ENCODE measurements at regions of chr12 and their contacts with region 1.

Region 1: GRCh38 chr12:53481957-53482586 is 17.2 kb downstream of the MAP3K12 start:
- DNase-seq: no peak
- H3K4me3 ChIP-seq: no peak overlapping the region
- H3K27ac ChIP-seq: no peak overlapping the region
- H3K4me1 ChIP-seq: peaks cover 0 to 5% (median 1%) of the 10 kb centered on the region in 4 experiments; a peak in 4 of 7 replicates
- H3K27me3 ChIP-seq: no peaks in the 10 kb centered on the region
- CTCF ChIP-seq: peak; percentile 26 to 73 (median 46)
- EP300 ChIP-seq: no peak
- POLR2A ChIP-seq: peak; percentile 14 to 22; a peak in 2 of 3 replicates
- RAD21 ChIP-seq: peak; percentile 39 to 40; a peak in 3 of 4 replicates

Region 2: GRCh38 chr12:53344824-53345485 is 137.1 kb before region 1 on chr12:
- CTCF ChIA-PET with region 1: interaction called, 11 read pairs
- POLR2A ChIA-PET with region 1: interaction called, 12 read pairs
- DNase-seq: peak in 1 of 2 experiments; percentile 78
- H3K4me3 ChIP-seq: peak overlapping the region; percentile 37 to 80 (median 72)
- H3K27ac ChIP-seq: no peak overlapping the region
- H3K4me1 ChIP-seq: peaks cover 0 to 15% (median 8%) of the 10 kb centered on the region in 4 experiments; a peak in 5 of 7 replicates
- H3K27me3 ChIP-seq: peaks cover 3 to 13% (median 8%) of the 10 kb centered on the region in 4 experiments; a peak in 4 of 7 replicates
- CTCF ChIP-seq: peak in 2 of 3 experiments; percentile 12 to 24; a peak in 2 of 4 replicates
- EP300 ChIP-seq: no peak
- POLR2A ChIP-seq: 0 out of 3 replicates have a peak, but pooled peaks of 1 of the 2 experiments have one; percentile 32
- RAD21 ChIP-seq: peak in 1 of 2 experiments; percentile 35; a peak in 2 of 4 replicates

Region 3: DNA sequence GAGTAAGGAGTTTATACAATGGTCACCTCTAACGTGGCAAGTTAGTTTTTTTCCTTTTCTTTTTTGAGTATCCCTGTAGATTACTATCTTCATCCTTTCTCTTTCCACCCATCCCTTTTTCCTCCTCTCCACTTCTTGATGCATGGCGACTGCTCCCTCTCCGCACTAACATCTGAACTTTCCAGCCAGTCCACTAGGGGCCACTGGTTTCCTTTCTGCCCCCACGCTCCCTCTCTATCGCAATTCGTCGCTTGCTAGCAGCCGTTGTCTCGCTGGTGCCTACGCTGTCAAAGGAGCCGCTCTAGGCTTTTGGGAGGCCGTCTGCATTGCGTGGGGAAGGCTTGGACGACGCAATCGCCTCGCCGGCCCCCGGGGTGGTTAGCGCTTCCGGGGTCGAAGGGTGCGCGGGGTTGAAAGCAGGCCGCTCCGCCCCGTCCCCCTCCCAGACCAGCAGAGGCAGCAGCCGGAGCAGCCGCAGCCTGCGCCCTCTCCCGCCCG is 30.4 kb before region 1 on chr12 and contains the start of gene PCBP2:
- CTCF ChIA-PET with region 1: interaction called, 24 read pairs
- POLR2A ChIA-PET with region 1: interaction called, 3,397 read pairs
- DNase-seq: peak; percentile 92 to 98
- H3K4me3 ChIP-seq: peak within 1 kb of the TSS; percentile 89 to 99 (median 94)
- H3K27ac ChIP-seq: peak within 1 kb of the TSS; percentile 96
- H3K4me1 ChIP-seq: peaks cover 0 to 8% (median 1%) of the 10 kb centered on the region in 4 experiments; a peak in 3 of 7 replicates
- H3K27me3 ChIP-seq: no peaks in the 10 kb centered on the region
- CTCF ChIP-seq: peak; percentile 72 to 94 (median 85)
- EP300 ChIP-seq: peak in 1 of 2 experiments; percentile 86; a peak in 1 of 3 replicates
- POLR2A ChIP-seq: peak; percentile 91
- RAD21 ChIP-seq: no peak; a peak in 1 of 4 replicates
- total RNA-seq, gene PCBP2: 1,114 and 1,123 TPM in 2 replicates

Region 4: DNA sequence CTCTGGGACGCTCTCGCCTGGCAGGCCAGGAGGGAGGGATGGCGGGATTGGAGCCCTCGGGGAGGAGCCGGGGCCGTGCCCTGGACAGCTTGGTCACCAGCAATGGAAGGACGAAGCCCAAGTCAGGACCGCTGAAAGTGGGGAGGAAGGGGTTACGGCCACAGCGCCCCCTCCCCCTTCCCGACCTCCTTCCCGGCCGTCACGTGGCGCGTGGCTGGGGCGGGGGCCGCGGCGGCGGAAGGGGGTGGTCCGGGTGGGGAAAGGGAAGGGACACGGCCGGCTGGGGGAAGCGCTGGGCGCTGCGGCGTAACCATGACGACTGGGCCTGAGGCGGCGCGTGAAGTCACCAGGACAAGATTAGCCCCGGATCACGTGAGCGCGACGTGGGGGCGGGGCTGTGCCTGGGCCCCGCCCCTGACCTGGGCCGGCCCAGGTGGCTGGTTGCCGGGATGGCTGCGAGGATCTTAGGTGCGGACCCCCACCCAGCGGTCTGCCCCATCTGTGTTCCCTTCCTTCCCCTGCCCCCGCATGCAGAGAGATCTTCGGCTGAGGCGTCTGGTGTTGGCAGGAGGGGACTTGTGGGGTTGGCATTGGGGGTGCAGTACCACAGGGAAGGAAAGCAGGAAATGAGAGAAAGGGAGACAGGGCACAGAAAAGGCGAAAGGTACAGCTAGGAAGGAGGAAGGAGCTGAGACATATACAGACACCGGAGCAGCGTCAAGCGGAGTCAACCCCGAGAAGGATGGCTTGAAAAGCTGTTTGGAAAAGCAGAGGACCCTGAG is 10.9 kb after region 1 on chr12:
- CTCF ChIA-PET with region 1: interaction called, 48 read pairs
- POLR2A ChIA-PET with region 1: interaction called, 3,397 read pairs
- DNase-seq: peak; percentile 86 to 96
- H3K4me3 ChIP-seq: peak overlapping the region; percentile 54 to 65 (median 57)
- H3K27ac ChIP-seq: peak overlapping the region; percentile 55; the same call in 1 of the 2 replicates
- H3K4me1 ChIP-seq: peaks cover 11 to 37% (median 15%) of the 10 kb centered on the region in 4 experiments
- H3K27me3 ChIP-seq: no peaks in the 10 kb centered on the region
- CTCF ChIP-seq: no peak
- EP300 ChIP-seq: no peak; a peak in 1 of 3 replicates
- POLR2A ChIP-seq: peak in 1 of 2 experiments; percentile 76; a peak in 2 of 3 replicates
- RAD21 ChIP-seq: no peak

Region 5: GRCh38 chr12:53508534-53509199 is 26.6 kb after region 1 on chr12:
- CTCF ChIA-PET with region 1: interaction called, 105 read pairs
- POLR2A ChIA-PET with region 1: interaction called, 3,397 read pairs
- DNase-seq: peak; percentile 77 to 97
- H3K4me3 ChIP-seq: no peak overlapping the region
- H3K27ac ChIP-seq: no peak overlapping the region
- H3K4me1 ChIP-seq: no peaks in the 10 kb centered on the region
- H3K27me3 ChIP-seq: no peaks in the 10 kb centered on the region
- CTCF ChIP-seq: peak; percentile 94 to 99 (median 98)
- EP300 ChIP-seq: no peak
- POLR2A ChIP-seq: no peak
- RAD21 ChIP-seq: peak; percentile 99

Region 6: DNA sequence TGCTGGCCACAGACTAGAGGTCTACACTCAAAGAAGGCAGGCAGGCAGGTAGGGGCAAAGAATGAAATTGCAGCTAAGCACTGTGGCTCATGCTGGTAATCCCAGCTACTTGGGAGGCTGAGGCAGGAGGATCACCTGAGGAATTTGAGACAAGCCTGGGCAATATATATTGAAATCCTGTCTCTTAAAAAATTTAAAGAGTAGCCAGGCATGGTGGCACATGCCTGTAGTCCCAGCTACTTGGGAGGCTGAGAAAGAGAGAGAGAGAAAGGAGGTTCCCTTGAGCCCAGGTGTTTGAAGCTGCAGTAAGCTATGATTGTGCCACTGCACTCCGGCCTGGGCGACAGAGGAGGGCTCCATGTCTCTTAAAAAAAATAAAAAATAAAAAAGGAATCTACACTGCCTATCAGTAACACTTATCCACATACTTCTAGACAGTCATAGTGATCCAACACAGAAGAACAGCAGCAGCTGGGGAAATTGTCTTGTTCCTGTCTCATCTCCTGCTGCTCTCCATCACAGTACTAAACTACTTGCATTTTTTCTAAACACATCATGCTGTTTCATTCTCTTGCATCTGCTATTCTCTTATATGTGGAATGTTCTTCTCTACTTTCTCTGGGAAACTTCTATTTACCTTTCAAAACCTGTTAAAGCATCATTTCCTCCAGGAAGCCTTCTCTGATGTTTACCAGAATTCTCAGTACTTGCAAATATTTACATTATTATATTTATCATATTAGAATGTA is 86.9 kb after region 1 on chr12:
- CTCF ChIA-PET with region 1: no interaction called
- POLR2A ChIA-PET with region 1: no interaction called
- DNase-seq: peak in 1 of 2 experiments; percentile 3
- H3K4me3 ChIP-seq: no peak overlapping the region
- H3K27ac ChIP-seq: no peak overlapping the region
- H3K4me1 ChIP-seq: peaks cover 0 to 10% (median 1%) of the 10 kb centered on the region in 4 experiments; a peak in 5 of 7 replicates
- H3K27me3 ChIP-seq: no peaks in the 10 kb centered on the region
- CTCF ChIP-seq: no peak
- EP300 ChIP-seq: no peak
- POLR2A ChIP-seq: no peak
- RAD21 ChIP-seq: no peak

Measured in H1 (cell line).